ENCODE measurements at regions of chr1 and their contacts with region 1.

Region 1: GRCh38 chr1:44631647-44632539 is 42.4 kb downstream of the TMEM53 start:
- DNase-seq: peak; percentile 84
- ATAC-seq: peak; percentile 85
- H3K4me3 ChIP-seq: peak overlapping the region; percentile 66 to 85 (median 76)
- H3K27ac ChIP-seq: peak overlapping the region; percentile 97
- H3K4me1 ChIP-seq: peaks cover 38% of the 10 kb centered on the region
- H3K27me3 ChIP-seq: no peaks in the 10 kb centered on the region
- CTCF ChIP-seq: no peak
- EP300 ChIP-seq: peak in 1 of 2 experiments; percentile 33; a peak in 1 of 4 replicates
- POLR2A ChIP-seq: peak; percentile 75 to 83
- RAD21 ChIP-seq: peak; percentile 71

Region 2: GRCh38 chr1:44131411-44131810 is 500.5 kb before region 1 on chr1:
- CTCF ChIA-PET with region 1: no interaction called
- POLR2A ChIA-PET with region 1: no interaction called
- in situ Hi-C with region 1: no loop called
- intact Hi-C with region 1: no loop called
- DNase-seq: no peak
- ATAC-seq: no peak
- H3K4me3 ChIP-seq: no peak overlapping the region
- H3K27ac ChIP-seq: no peak overlapping the region
- H3K4me1 ChIP-seq: no peaks in the 10 kb centered on the region
- H3K27me3 ChIP-seq: peaks cover 3 to 42% of the 10 kb centered on the region in 2 experiments; a peak in 4 of 5 replicates
- CTCF ChIP-seq: no peak
- EP300 ChIP-seq: no peak
- POLR2A ChIP-seq: no peak
- RAD21 ChIP-seq: no peak

Region 3: GRCh38 chr1:44571712-44572571 is 60.0 kb before region 1 on chr1:
- CTCF ChIA-PET with region 1: no interaction called
- POLR2A ChIA-PET with region 1: no interaction called
- in situ Hi-C with region 1: no loop called
- intact Hi-C with region 1: no loop called
- DNase-seq: peak; percentile 39
- ATAC-seq: peak; percentile 58; the same call in 2 of the 3 replicates
- H3K4me3 ChIP-seq: no peak overlapping the region
- H3K27ac ChIP-seq: no peak overlapping the region
- H3K4me1 ChIP-seq: peaks cover 10% of the 10 kb centered on the region
- H3K27me3 ChIP-seq: peaks cover 0 to 6% of the 10 kb centered on the region in 2 experiments; a peak in 1 of 5 replicates
- CTCF ChIP-seq: peak; percentile 57
- EP300 ChIP-seq: no peak
- POLR2A ChIP-seq: no peak
- RAD21 ChIP-seq: no peak

Region 4: DNA sequence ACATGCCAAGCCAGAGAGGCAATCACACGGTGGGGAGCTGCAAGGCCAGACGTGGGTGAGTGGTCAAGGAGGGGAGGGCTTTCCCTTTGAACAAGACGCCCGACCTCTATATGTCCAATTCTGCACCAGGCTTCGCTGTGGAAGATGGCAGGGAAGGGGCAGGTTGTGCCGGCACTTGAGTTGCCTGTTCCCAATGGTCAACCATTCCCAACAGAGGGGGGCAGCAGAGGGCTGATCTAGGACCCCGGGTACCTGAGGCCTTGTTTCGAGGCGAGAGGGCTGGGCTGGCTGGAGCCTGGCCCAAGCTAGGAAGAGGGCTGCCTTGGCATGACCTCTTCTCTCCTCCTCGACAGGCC is 22.5 kb before region 1 on chr1:
- CTCF ChIA-PET with region 1: no interaction called
- POLR2A ChIA-PET with region 1: interaction called, 9 read pairs
- in situ Hi-C with region 1: no loop called
- intact Hi-C with region 1: loop called (anchors 1 kb)
- DNase-seq: peak; percentile 28
- ATAC-seq: peak; percentile 88
- H3K4me3 ChIP-seq: no peak overlapping the region
- H3K27ac ChIP-seq: no peak overlapping the region
- H3K4me1 ChIP-seq: no peaks in the 10 kb centered on the region
- H3K27me3 ChIP-seq: no peaks in the 10 kb centered on the region; a peak in 1 of 5 replicates
- CTCF ChIP-seq: peak; percentile 82
- EP300 ChIP-seq: no peak
- POLR2A ChIP-seq: no peak
- RAD21 ChIP-seq: peak; percentile 63; the same call in 1 of the 2 replicates

Region 5: GRCh38 chr1:44645476-44646244 is 13.8 kb after region 1 on chr1:
- CTCF ChIA-PET with region 1: no interaction called
- POLR2A ChIA-PET with region 1: interaction called, 25 read pairs
- in situ Hi-C with region 1: no loop called
- intact Hi-C with region 1: no loop called
- DNase-seq: no peak
- ATAC-seq: no peak
- H3K4me3 ChIP-seq: no peak overlapping the region
- H3K27ac ChIP-seq: no peak overlapping the region
- H3K4me1 ChIP-seq: no peaks in the 10 kb centered on the region
- H3K27me3 ChIP-seq: no peaks in the 10 kb centered on the region
- CTCF ChIP-seq: no peak
- EP300 ChIP-seq: no peak
- POLR2A ChIP-seq: no peak
- RAD21 ChIP-seq: no peak

Region 6: DNA sequence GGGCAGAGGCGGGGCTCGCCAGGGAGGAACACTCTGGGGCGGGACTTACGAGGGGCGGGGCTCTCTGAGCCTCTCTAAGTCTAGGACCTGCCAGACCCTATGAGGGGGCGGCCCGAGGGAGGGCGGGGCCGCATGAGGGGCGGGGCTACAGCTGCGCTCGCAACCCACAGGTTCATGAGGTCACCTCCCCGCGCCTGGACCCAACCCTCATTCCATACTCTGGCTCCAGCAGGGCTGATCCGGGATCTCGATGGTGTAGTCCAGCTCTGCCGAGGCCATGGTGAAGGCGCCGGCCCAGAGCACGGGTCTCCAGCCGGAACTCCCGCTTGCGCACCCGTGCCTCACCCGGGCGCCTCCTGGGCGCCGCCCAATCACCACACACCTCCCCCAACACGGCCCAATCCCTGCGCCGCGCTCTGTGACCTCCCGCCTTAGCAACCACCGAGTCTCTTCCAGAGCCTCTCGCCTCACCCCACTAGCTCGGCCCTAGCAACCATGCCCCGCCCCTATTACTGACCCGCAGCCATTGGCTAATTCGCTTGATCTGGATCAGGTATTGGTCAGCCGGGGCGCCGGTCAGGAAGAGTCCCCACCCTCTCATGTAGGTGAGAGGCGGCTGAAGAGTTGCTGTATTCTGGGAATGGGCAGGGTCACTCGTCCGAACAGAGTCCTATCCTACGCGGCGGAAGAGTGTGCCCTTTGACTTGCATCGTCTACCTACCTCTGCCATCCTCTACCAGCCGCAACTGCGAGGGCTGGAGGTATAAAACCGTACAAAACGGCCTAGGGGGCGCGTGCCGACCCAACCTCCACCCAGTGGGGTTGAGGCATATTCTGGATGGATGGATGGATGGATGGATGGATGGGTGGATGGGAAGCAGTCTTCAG is 42.5 kb after region 1 on chr1 and contains the starts of genes ARMH1 and TMEM53:
- CTCF ChIA-PET with region 1: no interaction called
- POLR2A ChIA-PET with region 1: interaction called, 34 read pairs
- in situ Hi-C with region 1: no loop called
- intact Hi-C with region 1: no loop called
- DNase-seq: peak; percentile 98
- ATAC-seq: peak; percentile 93
- H3K4me3 ChIP-seq: peak within 1 kb of the TSS; percentile 64 to 76 (median 67)
- H3K27ac ChIP-seq: peak within 1 kb of the TSS; percentile 93
- H3K4me1 ChIP-seq: peaks cover 65% of the 10 kb centered on the region
- H3K27me3 ChIP-seq: no peaks in the 10 kb centered on the region
- CTCF ChIP-seq: peak; percentile 32; the same call in 1 of the 2 replicates
- EP300 ChIP-seq: peak in 1 of 2 experiments; percentile 18; a peak in 2 of 4 replicates
- POLR2A ChIP-seq: peak; percentile 70 to 91
- RAD21 ChIP-seq: peak; percentile 47; the same call in 1 of the 2 replicates
- total RNA-seq, gene ARMH1: not detected in 2 replicates
- total RNA-seq, gene TMEM53: 12.6 and 13.8 TPM in 2 replicates

Region 7: GRCh38 chr1:45205910-45206721 is 574.2 kb after region 1 on chr1 and contains the start of gene ZSWIM5:
- CTCF ChIA-PET with region 1: no interaction called
- POLR2A ChIA-PET with region 1: no interaction called
- in situ Hi-C with region 1: no loop called
- intact Hi-C with region 1: loop called (anchors 5 kb)
- DNase-seq: peak; percentile 48
- ATAC-seq: peak; percentile 87
- H3K4me3 ChIP-seq: peak within 1 kb of the TSS; percentile 88 to 96 (median 95)
- H3K27ac ChIP-seq: peak within 1 kb of the TSS; percentile 95
- H3K4me1 ChIP-seq: peaks cover 43% of the 10 kb centered on the region
- H3K27me3 ChIP-seq: no peaks in the 10 kb centered on the region; a peak in 1 of 5 replicates
- CTCF ChIP-seq: peak; percentile 23; the same call in 1 of the 2 replicates
- EP300 ChIP-seq: no peak
- POLR2A ChIP-seq: peak; percentile 78 to 84
- RAD21 ChIP-seq: peak; percentile 70
- total RNA-seq, gene ZSWIM5: 11.0 and 13.5 TPM in 2 replicates